Esophagus squamous epithelium (tissue), 5 donors: ENCODE measurements at regions of chr13 and their contacts with region 1.

Region 1: GRCh38 chr13:29362849-29363604 is 232.5 kb downstream of the SLC7A1 start:
- DNase-seq: no peak
- H3K4me3 ChIP-seq: no peak overlapping the region
- H3K27ac ChIP-seq: no peak overlapping the region
- H3K4me1 ChIP-seq: no peaks in the 10 kb centered on the region
- H3K27me3 ChIP-seq: peaks cover 0 to 34% (median 2%) of the 10 kb centered on the region in 4 donors
- CTCF ChIP-seq: peak in 5 of 6 experiments; percentile 66 to 85 (median 78)
- POLR2A ChIP-seq: no peak

Region 2: GRCh38 chr13:28819735-28820098 is 543.3 kb before region 1 on chr13:
- intact Hi-C with region 1: loop called (anchors 10 kb)
- DNase-seq: no peak
- H3K4me3 ChIP-seq: peak overlapping the region in 3 of 4 donors; percentile 31 to 60 (median 45)
- H3K27ac ChIP-seq: no peak overlapping the region
- H3K4me1 ChIP-seq: peaks cover 3 to 17% (median 8%) of the 10 kb centered on the region in 3 donors
- H3K27me3 ChIP-seq: peaks cover 4 to 90% (median 7%) of the 10 kb centered on the region in 4 donors
- CTCF ChIP-seq: peak in 3 of 6 experiments; percentile 24 to 49 (median 36)
- POLR2A ChIP-seq: no peak